Activated CD4-positive, alpha-beta memory T cell treated with anti-CD3 and anti-CD28 coated beads for 36 hours (primary cell): ENCODE measurements at regions of chr4 and their contacts with region 1.

Region 1: GRCh38 chr4:40199999-40200874 is 3.4 kb downstream of the RHOH start:
- DNase-seq: peak; percentile 91
- H3K4me3 Mint-ChIP-seq: peak overlapping the region; percentile 93
- H3K27ac Mint-ChIP-seq: peak overlapping the region; percentile 98
- H3K4me1 Mint-ChIP-seq: peaks cover 39% of the 10 kb centered on the region
- H3K27me3 Mint-ChIP-seq: no peaks in the 10 kb centered on the region

Region 2: DNA sequence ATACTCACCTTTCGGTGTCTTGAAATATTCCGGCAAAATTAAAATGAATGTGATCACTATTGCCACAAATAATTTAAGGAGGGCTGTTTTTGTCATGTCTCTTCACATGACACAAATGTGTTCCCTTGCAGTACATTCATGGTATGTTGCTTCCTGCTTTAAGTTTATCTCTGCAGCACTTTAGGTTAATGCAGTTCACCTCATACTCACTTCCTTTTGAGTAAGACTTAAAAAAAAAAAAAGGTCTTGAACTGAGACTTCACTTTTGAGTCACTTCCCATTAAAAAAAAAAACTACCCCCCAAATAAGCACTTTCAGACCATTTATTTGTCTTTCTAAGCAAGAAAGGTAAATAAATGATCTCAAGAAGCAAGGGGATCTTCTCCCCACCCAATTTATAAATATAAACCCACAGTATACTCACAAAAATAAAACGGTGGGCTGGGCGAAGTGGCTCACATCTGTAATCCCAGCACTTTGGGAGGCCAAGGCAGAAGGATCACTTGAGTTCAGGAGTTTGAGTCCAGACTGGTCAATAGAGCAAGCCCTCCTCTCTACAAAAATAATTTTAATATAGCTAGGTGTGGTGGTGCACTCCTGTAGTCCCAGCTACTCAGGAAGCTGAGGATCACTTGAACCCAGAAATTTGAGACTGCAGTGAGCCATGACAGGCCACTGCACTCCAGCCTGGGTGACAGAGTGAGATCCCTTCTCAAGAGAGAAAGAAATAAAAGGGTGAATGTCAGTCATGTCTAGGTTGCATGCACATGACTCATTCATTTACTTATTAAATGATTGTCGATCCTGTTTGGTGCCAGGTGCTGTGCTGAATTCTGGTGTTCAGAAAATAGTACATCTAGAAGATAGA is 1167.8 kb before region 1 on chr4 and contains the start of gene TMEM156:
- CTCF ChIA-PET with region 1: no interaction called
- POLR2A ChIA-PET with region 1: no interaction called
- intact Hi-C with region 1: loop called (anchors 10 kb)
- DNase-seq: peak; percentile 71
- H3K4me3 Mint-ChIP-seq: peak within 1 kb of the TSS; percentile 78
- H3K27ac Mint-ChIP-seq: peak within 1 kb of the TSS; percentile 87
- H3K4me1 Mint-ChIP-seq: peaks cover 47% of the 10 kb centered on the region
- H3K27me3 Mint-ChIP-seq: no peaks in the 10 kb centered on the region
- total RNA-seq, gene TMEM156: 28.0 to 28.4 TPM

Region 3: GRCh38 chr4:39977489-39978377 is 222.5 kb before region 1 on chr4 and contains the start of gene PDS5A:
- CTCF ChIA-PET with region 1: no interaction called
- POLR2A ChIA-PET with region 1: no interaction called
- intact Hi-C with region 1: loop called (anchors 5 kb)
- DNase-seq: peak; percentile 93
- H3K4me3 Mint-ChIP-seq: peak within 1 kb of the TSS; percentile 94
- H3K27ac Mint-ChIP-seq: peak within 1 kb of the TSS; percentile 99
- H3K4me1 Mint-ChIP-seq: peaks cover 38% of the 10 kb centered on the region
- H3K27me3 Mint-ChIP-seq: no peaks in the 10 kb centered on the region
- total RNA-seq, gene PDS5A: 101 to 103 TPM

Region 4: GRCh38 chr4:40185830-40186664 is 14.2 kb before region 1 on chr4:
- CTCF ChIA-PET with region 1: interaction called, 4 read pairs
- POLR2A ChIA-PET with region 1: interaction called, 26 read pairs
- intact Hi-C with region 1: loop called (anchors 1 kb)
- DNase-seq: no peak
- H3K4me3 Mint-ChIP-seq: no peak overlapping the region
- H3K27ac Mint-ChIP-seq: peak overlapping the region; percentile 49
- H3K4me1 Mint-ChIP-seq: peaks cover 63% of the 10 kb centered on the region
- H3K27me3 Mint-ChIP-seq: no peaks in the 10 kb centered on the region

Region 5: DNA sequence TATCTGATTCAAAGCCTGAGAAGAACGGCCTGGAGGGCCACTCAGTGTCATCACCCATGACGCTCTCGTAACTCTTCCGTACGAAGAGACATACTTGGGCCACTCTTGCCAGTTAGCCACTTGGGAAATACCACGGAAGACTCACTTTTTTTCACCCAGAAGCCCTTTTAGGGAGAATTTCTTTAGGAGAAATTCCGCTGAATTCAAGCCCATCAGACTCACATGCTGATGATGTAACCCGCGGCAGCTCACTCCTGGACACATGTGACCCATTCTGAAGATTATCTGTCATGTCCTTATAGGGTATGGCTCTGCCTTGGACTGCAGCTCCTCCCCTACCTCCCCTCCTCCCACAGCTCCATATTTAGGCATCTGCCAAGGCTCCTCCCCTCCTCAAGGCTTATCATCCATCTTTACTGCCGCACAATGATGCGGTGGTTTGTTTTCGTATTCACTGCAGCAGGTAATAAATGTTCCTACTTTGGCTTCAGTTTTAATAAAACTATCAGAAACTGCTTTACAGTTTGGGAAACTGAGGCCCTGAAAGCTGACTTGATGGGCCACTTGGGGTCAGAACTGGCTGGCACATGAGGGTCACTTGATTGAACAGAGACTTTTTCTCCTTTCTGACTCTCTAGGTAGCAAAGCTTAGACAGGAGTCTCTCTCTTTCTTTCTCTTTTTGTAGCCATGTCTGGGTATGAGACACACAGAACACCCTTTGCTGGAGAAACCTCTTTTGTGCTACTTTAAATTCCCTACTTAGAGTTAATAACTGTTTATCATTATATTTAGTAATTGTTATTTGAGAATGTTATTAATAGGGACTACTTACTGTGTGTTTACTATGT is 38.7 kb after region 1 on chr4:
- CTCF ChIA-PET with region 1: interaction called, 5 read pairs
- POLR2A ChIA-PET with region 1: interaction called, 32 read pairs
- intact Hi-C with region 1: loop called (anchors 1 kb)
- DNase-seq: peak; percentile 91
- H3K4me3 Mint-ChIP-seq: peak overlapping the region; percentile 75
- H3K27ac Mint-ChIP-seq: peak overlapping the region; percentile 96
- H3K4me1 Mint-ChIP-seq: peaks cover 88% of the 10 kb centered on the region
- H3K27me3 Mint-ChIP-seq: no peaks in the 10 kb centered on the region

Region 6: GRCh38 chr4:40316782-40317635 is 116.8 kb after region 1 on chr4:
- CTCF ChIA-PET with region 1: interaction called, 24 read pairs
- POLR2A ChIA-PET with region 1: interaction called, 53 read pairs
- intact Hi-C with region 1: loop called (anchors 1 kb)
- DNase-seq: peak; percentile 77
- H3K4me3 Mint-ChIP-seq: peak overlapping the region; percentile 78
- H3K27ac Mint-ChIP-seq: peak overlapping the region; percentile 94
- H3K4me1 Mint-ChIP-seq: peaks cover 36% of the 10 kb centered on the region
- H3K27me3 Mint-ChIP-seq: no peaks in the 10 kb centered on the region